Left ventricle myocardium superior (tissue), 1 donor: ENCODE measurements at regions of chr7 and their contacts with region 1.

Region 1: GRCh38 chr7:2477447-2478398 is 1.5 kb upstream of the GRIFIN start:
- DNase-seq: peak; percentile 80
- ATAC-seq: peak; percentile 85

Region 2: DNA sequence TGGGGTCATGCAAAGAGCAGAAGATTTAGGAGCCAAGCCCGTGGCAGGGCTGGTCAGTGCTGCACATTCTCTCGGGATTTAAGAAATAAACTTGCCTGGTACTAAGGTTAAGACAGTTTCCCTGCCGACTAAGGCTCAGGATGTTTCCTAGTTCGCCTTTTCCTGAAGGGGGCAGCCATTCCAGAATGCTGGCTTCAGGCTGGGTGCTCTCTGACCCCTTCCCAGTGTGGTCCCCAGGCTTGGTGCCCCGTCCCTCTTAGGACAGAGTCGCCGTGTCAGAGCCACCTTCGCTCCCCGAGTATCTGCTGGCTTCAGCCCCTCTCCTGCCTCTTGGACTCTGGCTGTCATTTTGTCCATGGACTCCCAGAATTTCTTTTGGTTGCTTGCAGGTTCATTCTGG is 690.5 kb before region 1 on chr7:
- intact Hi-C with region 1: no loop called
- DNase-seq: no peak
- ATAC-seq: no peak

Region 3: GRCh38 chr7:1819259-1819841 is 658.4 kb before region 1 on chr7:
- intact Hi-C with region 1: no loop called
- DNase-seq: no peak
- ATAC-seq: no peak

Region 4: DNA sequence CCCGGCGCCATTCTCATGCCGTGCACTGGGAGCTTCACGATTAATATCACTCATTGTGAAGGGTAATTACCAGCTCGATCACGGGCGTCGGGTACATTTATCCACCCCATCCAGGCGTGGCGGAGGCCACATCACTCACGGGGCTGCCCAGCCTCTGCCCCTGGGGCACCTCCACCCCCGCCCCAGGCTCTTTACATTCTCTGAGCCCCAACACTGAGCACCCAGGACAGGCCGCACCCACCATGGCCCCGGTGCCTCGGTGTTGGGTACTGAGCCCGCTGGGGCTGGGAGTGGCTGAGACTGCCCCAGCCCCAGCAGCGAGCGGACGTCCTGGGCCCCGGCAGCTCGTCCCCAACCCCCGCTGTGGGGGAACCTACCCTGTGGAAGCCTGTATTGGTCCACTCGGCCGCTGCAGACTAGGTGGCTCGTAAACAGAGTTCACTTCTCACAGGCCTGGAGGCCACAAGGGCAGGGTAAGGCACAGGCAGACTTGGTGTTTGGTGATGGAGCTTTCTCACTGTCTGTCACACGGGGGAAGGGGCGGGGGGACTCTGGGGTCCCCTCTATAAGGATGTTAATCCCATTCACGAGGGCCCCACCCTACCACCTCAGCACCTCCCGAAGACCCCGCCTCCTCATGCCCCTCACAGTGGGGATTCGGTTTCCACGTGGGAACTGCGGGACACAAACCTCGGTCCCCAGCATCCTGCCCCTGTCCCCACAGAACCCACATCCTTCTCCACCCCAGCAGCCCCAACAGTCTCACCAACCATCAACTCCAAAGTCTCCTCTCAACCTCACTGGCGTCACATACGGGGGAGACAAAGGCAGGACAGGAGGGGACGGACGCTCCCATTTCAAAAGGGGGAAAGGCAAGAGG is 623.5 kb before region 1 on chr7:
- intact Hi-C with region 1: no loop called
- DNase-seq: peak; percentile 14
- ATAC-seq: no peak

Region 5: GRCh38 chr7:2567679-2568278 is 90.1 kb after region 1 on chr7:
- intact Hi-C with region 1: loop called (anchors 10 kb)
- DNase-seq: peak; percentile 55
- ATAC-seq: peak; percentile 88